A549 (cell line): ENCODE measurements at regions of chr2 and their contacts with region 1.

Region 1: DNA sequence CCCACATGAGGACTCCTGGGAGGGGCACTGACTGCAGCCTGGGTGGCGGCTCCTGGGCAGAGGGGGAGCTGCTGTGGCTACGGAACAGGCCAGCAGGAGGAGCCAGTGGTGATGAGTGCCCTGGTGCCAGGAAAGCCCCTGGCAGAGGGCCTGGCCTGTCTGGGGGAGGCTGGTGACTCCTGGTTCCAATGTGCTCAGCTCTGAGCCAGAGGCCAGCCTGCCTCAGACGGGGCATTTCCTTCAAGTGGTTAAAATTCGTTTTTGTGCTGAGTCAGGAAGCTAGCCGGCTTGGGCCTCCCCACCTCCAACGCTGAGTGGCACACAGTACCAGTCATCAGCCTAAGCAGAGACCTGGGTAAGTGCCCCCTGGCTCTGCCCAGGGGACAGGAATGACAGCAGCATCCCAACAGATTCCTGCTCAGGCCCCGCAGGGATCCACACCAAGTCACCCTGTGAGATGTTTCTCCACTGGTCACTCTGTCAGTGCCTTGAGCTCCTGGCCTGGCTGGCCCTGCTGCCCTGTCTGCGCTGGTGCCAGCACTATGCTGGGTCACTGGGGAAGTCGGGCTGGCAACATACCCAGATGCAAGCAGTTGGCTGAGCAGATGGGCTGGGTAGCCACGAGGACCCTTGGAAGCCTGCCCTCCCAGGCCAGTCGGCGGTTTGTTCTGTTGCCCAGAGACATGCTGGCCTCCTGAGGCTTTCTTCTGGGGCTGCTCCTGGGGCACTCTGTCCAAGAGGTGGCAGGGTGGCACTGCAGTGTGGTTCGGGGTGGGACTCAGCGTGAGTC is 7.1 kb upstream of the KLF11 start:
- DNase-seq: peak; percentile 84 to 95
- ATAC-seq: peak; percentile 88 to 94
- H3K4me3 ChIP-seq: no peak overlapping the region
- H3K27ac ChIP-seq: peak overlapping the region; percentile 53 to 83
- H3K4me1 ChIP-seq: peaks cover 16% of the 10 kb centered on the region
- CTCF ChIP-seq: peak; percentile 62
- EP300 ChIP-seq: no peak
- POLR2A ChIP-seq: no peak
- RAD21 ChIP-seq: peak; percentile 43; a peak in 3 of 5 replicates

Region 2: GRCh38 chr2:10019174-10019573 is 17.1 kb before region 1 on chr2:
- CTCF ChIA-PET with region 1: interaction called, 53 read pairs
- POLR2A ChIA-PET with region 1: no interaction called
- DNase-seq: no peak
- ATAC-seq: no peak
- H3K4me3 ChIP-seq: no peak overlapping the region
- H3K27ac ChIP-seq: no peak overlapping the region
- H3K4me1 ChIP-seq: no peaks in the 10 kb centered on the region
- CTCF ChIP-seq: no peak
- EP300 ChIP-seq: no peak
- POLR2A ChIP-seq: no peak
- RAD21 ChIP-seq: no peak

Region 3: DNA sequence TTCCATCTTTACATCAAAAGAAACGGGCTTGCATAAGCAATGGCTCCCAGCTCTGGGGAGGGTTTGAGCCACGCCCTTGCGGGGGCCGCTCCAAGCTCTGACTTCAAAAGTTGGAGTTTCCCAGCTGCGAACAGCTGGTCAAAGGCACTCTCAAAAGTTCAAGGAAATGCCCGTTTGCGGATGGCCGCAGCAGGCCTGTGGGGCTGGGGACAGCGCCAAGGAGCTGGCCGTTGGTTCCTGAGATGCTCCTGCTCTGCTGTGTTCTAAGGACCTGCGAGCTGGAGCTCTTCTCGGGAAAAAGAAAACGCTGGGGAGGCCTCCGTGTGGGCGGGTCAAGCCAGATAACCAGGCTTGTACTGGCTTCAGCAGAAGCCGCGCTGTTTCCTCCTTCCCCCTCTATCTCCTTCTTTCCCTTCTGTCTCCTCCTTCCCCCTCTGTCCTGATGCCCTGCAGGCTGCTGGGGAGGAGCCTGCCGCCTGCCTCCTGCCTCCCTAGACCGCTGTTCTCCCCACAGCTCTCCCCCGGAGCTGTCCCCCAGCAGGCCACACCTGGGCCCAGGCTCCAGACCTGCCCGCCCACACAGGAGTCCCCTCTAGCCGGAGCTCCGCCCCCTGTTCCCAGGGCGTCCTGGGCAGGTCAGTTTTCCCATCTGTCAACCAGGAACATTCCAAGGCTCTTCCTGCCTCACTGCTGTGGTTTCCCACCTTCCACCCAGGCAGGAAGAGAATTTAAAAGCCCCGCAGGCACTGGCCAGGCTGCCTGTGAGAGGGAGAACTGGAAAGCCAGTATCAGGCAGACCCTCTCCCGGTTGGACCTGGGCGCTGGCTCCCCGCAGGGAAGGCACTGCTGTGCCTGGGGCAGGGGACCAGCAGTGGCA is 21.2 kb after region 1 on chr2:
- CTCF ChIA-PET with region 1: interaction called, 80 read pairs
- POLR2A ChIA-PET with region 1: no interaction called
- DNase-seq: no peak
- ATAC-seq: peak in 1 of 2 experiments; percentile 16; a peak in 3 of 6 replicates
- H3K4me3 ChIP-seq: no peak overlapping the region
- H3K27ac ChIP-seq: no peak overlapping the region
- H3K4me1 ChIP-seq: no peaks in the 10 kb centered on the region
- CTCF ChIP-seq: no peak
- EP300 ChIP-seq: no peak
- POLR2A ChIP-seq: no peak
- RAD21 ChIP-seq: no peak